WTC11 (cell line): ENCODE measurements at regions of chr17 and their contacts with region 1.

Region 1: DNA sequence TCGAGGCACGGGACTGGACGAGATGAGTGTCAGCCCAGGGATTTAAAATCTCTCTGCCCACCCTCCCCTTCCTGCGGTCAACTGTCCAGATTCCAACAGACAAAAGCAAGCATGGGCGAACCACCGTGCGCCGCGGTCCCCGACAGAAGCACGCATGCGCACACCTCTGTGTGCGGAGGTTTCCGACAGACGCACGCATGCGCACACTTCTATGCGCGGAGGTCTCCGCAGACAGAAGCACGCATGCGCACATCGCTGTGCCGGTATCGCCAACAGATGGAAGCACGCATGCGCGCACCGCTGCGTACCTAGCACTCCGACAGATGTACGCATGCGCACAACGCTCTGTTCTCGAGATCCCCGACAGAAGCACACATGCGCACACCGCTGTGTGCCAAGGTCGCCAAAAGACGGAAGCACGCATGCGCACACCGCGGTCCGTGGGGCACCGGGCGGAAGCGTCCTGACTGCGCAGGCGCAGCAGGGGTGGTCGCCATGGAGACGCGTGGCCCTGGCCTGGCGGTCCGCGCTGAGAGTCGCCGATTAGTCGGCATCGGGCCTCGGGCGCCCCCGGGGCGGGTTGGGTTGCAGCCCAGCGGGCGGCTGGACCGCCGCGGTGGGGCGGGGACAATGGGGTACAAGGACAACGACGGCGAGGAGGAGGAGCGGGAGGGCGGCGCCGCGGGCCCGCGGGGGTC is 57.4 kb upstream of the RPH3AL start:
- DNase-seq: peak; percentile 100
- ATAC-seq: peak; percentile 78
- H3K4me3 Mint-ChIP-seq: peak overlapping the region; percentile 81
- H3K27ac Mint-ChIP-seq: peak overlapping the region; percentile 55
- H3K4me1 Mint-ChIP-seq: peaks cover 19% of the 10 kb centered on the region
- H3K27me3 Mint-ChIP-seq: peaks cover 20% of the 10 kb centered on the region
- CTCF ChIP-seq: no peak

Region 2: DNA sequence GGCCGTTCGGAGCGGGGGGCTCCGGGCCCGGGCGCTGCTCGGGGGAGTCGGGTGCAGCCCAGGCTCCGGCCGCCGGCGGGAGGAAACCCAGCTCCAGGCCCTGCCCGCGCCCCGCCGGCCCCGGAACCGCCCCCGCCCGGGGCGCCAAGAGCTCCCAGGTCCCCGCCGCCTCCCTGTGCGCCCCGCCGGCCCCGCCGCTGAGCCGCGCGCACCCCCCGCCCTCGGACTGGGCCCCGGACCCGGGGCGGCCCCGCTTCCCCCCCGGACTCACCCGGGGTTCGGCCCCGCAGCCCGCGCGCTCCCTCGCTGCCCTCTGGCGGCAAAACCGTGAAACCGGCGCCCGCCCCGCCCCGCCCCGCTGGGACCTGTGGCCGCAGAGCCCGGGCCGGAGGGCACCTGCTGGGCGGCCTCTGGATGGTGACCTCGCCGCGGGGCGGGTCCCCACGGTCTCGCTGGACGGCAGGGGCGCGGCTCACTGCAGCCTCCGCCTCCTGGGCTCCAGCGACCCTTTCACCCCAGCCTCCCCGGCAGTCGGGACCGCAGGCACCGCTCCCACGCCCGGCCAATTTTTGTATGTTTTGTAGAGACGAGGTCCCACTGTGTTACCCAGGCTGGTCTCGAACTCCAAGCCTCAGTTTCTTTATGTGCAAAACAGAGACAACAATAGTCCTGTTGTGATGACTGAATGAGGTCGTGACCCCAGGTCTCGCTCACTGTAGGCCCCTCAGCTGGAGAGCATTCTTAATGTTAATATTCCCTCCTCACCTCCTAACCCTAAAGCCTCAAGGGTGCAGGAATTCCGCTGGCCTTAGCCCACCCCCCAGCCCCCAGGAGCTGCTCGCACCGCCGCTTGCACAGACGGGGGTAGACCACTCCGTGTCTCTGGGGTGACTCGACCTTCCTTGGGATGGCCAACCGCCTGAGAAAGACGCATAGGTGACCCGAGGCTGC is 23.8 kb before region 1 on chr17:
- CTCF ChIA-PET with region 1: interaction called, 18 read pairs
- POLR2A ChIA-PET with region 1: no interaction called
- DNase-seq: peak; percentile 86
- ATAC-seq: peak; percentile 63
- H3K4me3 Mint-ChIP-seq: peak overlapping the region; percentile 74
- H3K27ac Mint-ChIP-seq: no peak overlapping the region
- H3K4me1 Mint-ChIP-seq: peaks cover 33% of the 10 kb centered on the region
- H3K27me3 Mint-ChIP-seq: peaks cover 61% of the 10 kb centered on the region
- CTCF ChIP-seq: peak; percentile 41

Region 3: DNA sequence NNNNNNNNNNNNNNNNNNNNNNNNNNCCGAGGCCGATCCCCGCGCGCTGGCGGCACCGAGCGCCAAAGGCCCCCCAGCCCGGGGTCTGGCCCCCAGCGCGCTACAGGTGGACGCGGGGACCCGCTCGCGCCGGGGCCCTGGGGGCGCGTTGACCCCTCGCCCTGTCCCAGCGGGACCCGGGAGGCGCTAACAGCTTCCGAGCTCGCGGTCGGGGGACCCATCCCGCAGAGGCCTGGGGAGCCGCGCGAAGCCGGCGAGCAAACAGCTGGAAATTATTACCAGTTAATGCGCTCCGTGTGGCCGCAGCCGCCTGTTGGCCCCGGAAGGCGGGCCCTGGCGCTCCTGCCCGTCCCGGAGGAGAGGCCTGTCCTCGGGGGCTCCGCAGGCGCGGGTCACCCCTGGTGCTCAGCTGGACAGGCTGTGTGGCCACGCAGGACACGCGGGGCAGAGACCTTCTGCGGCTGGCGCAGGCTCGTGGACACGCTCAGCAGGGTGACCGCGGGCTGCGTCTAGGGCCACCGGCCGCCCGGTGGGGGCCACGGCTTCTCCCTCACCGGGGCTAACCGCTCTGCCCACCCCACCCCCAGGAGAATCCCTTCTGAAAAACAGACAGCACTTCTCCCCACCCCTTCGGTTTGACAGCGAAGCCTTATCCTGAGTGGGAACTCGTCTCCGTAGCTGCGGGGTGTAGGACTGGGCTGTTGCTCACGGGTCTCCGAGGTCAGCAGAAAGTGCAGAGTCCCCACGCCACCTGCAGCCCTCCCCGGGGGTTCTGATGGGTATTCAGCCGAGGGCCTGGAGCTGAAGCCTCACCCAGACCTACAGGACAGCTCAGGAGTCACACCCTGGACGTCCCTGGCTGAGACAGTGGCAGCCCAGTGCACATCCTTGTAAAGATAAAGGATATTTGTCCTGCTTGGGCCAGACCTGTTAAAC is 81.4 kb after region 1 on chr17:
- CTCF ChIA-PET with region 1: interaction called, 25 read pairs
- POLR2A ChIA-PET with region 1: no interaction called
- DNase-seq: peak; percentile 58
- ATAC-seq: peak; percentile 33
- H3K4me3 Mint-ChIP-seq: peak overlapping the region; percentile 54
- H3K27ac Mint-ChIP-seq: no peak overlapping the region
- H3K4me1 Mint-ChIP-seq: peaks cover 16% of the 10 kb centered on the region
- H3K27me3 Mint-ChIP-seq: peaks cover 26% of the 10 kb centered on the region
- CTCF ChIP-seq: no peak

Region 4: DNA sequence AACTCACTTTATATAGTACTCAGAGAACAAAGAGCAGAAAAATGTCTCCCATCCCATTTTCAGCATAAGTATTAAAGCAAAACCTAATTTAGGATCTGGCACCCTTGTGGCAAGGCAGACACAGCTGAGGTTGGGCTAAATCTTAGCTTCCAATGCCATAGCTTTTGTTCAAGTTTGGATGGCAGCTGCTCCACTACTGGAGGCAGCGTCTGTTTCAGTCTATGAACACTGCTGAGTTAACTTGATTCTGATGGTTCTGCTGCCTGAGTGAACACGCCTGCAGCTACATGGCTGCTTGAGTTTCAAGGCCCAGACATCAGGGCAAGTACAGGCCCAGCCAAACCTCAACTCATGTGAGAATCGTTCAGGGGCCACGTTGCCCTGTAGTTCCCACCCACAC is 120.9 kb after region 1 on chr17:
- CTCF ChIA-PET with region 1: interaction called, 13 read pairs
- POLR2A ChIA-PET with region 1: no interaction called
- DNase-seq: no peak
- ATAC-seq: no peak
- H3K4me3 Mint-ChIP-seq: no peak overlapping the region
- H3K27ac Mint-ChIP-seq: no peak overlapping the region; the same call in 1 of the 2 replicates
- H3K4me1 Mint-ChIP-seq: no peaks in the 10 kb centered on the region
- H3K27me3 Mint-ChIP-seq: no peaks in the 10 kb centered on the region
- CTCF ChIP-seq: no peak

Region 5: DNA sequence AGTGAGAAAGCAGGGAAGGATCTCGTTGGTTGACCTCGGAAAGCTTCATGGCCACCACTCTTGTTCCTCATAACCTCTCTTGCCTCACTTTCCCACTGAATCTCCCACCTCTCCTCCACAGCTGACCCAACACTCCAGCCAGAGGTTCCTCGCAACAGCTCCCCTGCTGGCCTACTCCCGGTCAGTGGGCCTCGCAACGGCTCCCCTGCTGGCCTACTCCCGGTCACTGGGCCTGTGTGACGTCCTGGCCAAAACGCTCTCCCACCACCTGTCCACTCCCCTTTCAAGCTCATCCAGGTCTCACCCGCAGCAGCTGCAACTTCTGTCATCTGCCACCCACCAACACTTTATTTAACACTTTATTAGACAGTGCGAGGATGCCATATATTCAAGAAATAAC is 155.5 kb after region 1 on chr17:
- CTCF ChIA-PET with region 1: interaction called, 23 read pairs
- POLR2A ChIA-PET with region 1: no interaction called
- DNase-seq: peak; percentile 35
- ATAC-seq: peak; percentile 68
- H3K4me3 Mint-ChIP-seq: no peak overlapping the region
- H3K27ac Mint-ChIP-seq: peak overlapping the region; percentile 25; the same call in 1 of the 2 replicates
- H3K4me1 Mint-ChIP-seq: 0 out of 2 replicates have a peak, but pooled peaks cover 3% of the 10 kb centered on the region
- H3K27me3 Mint-ChIP-seq: no peaks in the 10 kb centered on the region; the same call in 1 of the 2 replicates
- CTCF ChIP-seq: no peak

Region 6: DNA sequence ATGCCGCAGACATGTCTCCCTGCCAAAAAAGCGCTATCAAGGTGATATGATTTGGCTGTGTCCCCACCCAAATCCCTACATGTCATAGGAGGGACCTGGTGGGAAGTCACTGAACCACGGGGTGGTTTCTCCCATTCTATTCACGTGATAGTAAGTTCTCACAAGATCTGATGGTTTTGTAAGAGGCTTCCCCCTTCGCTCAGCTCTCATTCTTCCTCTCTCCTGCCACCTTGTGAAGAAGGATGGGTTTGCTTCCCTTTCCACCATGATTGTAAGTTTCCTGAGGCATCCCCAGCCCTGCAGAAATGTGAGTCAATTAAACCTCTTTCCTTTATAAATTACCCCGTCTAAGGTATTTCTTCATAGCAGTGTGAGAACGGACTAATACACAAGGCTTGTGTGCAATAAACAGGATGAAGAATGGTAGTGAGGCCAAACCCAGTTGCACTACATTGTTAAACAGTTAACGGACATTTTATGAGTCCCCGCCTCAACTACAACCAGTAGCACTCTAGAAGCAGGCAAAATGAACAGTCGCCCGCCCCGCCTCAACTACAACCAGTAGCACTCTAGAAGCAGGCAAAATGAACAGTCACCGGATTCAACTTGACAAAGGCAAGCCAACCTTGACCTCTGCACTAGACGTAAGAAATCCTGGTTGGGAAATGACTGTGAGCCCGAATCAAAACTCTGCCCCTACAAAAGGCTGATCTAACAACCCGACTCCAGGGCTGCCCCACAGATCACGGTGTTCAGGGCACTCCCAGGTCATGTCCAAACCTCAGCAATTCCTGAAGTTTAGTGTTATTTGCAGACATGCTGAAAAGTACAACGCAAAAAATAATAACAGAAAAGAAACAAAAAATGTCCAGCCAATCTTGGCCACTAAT is 278.3 kb after region 1 on chr17:
- CTCF ChIA-PET with region 1: interaction called, 22 read pairs
- POLR2A ChIA-PET with region 1: no interaction called
- DNase-seq: peak; percentile 13
- ATAC-seq: peak; percentile 36; the same call in 1 of the 2 replicates
- H3K4me3 Mint-ChIP-seq: no peak overlapping the region
- H3K27ac Mint-ChIP-seq: peak overlapping the region; percentile 20; the same call in 1 of the 2 replicates
- H3K4me1 Mint-ChIP-seq: peaks cover 5% of the 10 kb centered on the region
- H3K27me3 Mint-ChIP-seq: no peaks in the 10 kb centered on the region
- CTCF ChIP-seq: no peak

Region 7: DNA sequence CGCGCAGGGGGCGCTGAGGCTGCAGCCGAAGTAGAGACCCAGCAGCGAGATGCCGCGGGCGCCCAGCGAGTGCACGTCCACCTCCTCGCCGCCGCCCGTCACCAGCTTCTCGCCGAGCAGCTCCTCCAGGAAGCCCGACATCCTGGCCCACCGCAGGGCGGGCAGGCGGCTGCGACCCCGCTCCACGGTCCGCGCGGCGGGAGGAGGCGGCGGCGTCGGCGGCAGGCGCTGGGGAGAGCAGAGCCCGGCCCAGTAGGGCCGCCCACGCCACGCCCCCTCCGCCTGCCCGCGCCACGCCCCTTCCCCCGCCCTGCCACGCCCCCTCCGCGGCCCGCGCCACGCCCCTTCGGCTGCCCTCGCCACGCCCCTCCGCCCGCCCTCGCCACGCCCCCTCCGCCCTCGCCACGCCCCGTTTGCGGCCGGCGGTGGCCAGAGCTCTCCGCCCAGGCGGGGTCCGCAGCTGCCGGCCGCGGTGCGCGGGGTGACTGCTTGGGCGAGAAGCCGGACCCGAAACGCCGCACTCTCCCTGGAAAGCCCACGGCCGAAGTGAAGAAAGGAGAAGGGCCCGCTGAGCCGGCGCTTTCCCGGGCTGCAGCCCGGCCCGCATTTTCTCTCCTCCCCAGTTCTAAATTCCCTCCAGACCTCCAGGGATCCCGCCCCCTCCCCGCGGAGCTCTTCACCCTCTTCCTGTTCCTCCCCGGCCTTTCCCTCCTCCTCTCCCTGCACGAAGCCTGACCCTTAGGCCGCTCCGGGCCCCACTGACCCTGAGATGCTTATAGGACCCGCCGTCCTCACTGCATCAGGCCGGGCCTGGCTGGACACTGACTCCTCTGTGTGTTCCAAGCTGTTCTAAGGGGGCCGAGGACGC is 569.8 kb after region 1 on chr17 and contains the start of gene NXN:
- CTCF ChIA-PET with region 1: interaction called, 14 read pairs
- POLR2A ChIA-PET with region 1: no interaction called
- DNase-seq: peak; percentile 83
- ATAC-seq: peak; percentile 74
- H3K4me3 Mint-ChIP-seq: peak within 1 kb of the TSS; percentile 93
- H3K27ac Mint-ChIP-seq: peak within 1 kb of the TSS; percentile 96; the same call in 1 of the 2 replicates
- H3K4me1 Mint-ChIP-seq: peaks cover 37% of the 10 kb centered on the region
- H3K27me3 Mint-ChIP-seq: no peaks in the 10 kb centered on the region
- CTCF ChIP-seq: no peak
- total RNA-seq, gene NXN: 96.8 to 100 TPM (median 98.7 TPM) in 3 replicates